Mammary epithelial cell (primary cell): ENCODE measurements at regions of chr6 and their contacts with region 1.

Region 1: GRCh38 chr6:27132532-27133280 is 114.8 kb upstream of the PRSS16 start:
- DNase-seq: peak; percentile 99
- H3K4me3 ChIP-seq: peak overlapping the region; percentile 64 to 69 (median 68)
- H3K27ac ChIP-seq: peak overlapping the region; percentile 97
- H3K4me1 ChIP-seq: peaks cover 13% of the 10 kb centered on the region
- H3K27me3 ChIP-seq: no peaks in the 10 kb centered on the region
- CTCF ChIP-seq: no peak

Region 2: GRCh38 chr6:26031595-26032339 is 1100.9 kb before region 1 on chr6:
- CTCF ChIA-PET with region 1: no interaction called
- dilution Hi-C with region 1: no loop called
- in situ Hi-C with region 1: loop called in 1 of 2 experiments (anchors 25 kb)
- intact Hi-C with region 1: loop called (anchors 2 kb)
- DNase-seq: peak; percentile 96
- H3K4me3 ChIP-seq: peak overlapping the region; percentile 53 to 62 (median 61)
- H3K27ac ChIP-seq: peak overlapping the region; percentile 85
- H3K4me1 ChIP-seq: peaks cover 26% of the 10 kb centered on the region
- H3K27me3 ChIP-seq: no peaks in the 10 kb centered on the region
- CTCF ChIP-seq: peak; percentile 5 to 23

Region 3: GRCh38 chr6:26187981-26188635 is 944.6 kb before region 1 on chr6:
- CTCF ChIA-PET with region 1: no interaction called
- dilution Hi-C with region 1: loop called (anchors 25 kb)
- in situ Hi-C with region 1: no loop called
- intact Hi-C with region 1: loop called (anchors 1 kb)
- DNase-seq: no peak
- H3K4me3 ChIP-seq: peak overlapping the region; percentile 30 to 59 (median 51)
- H3K27ac ChIP-seq: peak overlapping the region; percentile 79
- H3K4me1 ChIP-seq: peaks cover 17% of the 10 kb centered on the region
- H3K27me3 ChIP-seq: no peaks in the 10 kb centered on the region
- CTCF ChIP-seq: no peak

Region 4: DNA sequence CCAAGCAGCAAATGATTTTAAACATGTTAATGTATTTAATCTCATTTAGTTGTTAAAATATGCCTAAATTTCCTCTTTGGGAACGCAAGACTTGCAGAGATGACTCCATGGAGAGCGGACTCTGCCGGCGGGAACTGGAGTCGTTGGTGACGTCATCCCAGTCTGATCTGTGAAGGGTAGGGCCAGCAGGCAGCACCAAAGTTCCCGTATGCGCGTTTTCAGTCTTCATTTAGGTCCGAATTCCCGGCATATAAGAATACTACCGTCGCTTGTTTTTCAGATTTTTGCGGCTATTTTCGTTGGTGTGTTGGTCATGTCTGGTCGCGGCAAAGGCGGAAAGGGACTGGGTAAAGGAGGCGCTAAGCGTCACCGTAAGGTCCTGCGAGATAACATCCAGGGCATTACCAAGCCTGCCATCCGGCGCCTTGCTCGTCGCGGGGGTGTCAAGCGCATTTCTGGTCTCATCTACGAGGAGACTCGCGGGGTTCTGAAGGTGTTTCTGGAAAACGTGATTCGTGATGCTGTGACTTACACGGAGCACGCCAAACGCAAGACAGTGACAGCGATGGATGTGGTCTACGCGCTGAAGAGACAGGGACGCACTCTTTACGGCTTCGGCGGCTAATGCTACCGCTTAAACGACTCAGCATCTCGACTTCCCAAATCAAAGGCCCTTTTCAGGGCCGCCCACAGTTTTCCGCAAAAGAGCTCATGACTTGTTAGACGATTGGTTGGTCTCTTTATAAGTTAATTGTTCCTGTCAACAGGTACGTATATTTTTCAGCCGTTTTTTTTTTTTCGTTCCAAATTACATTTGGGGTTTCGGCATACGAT is 928.2 kb before region 1 on chr6:
- CTCF ChIA-PET with region 1: no interaction called
- dilution Hi-C with region 1: loop called (anchors 25 kb)
- in situ Hi-C with region 1: loop called in 1 of 2 experiments (anchors 25 kb)
- intact Hi-C with region 1: loop called (anchors 2 kb)
- DNase-seq: peak; percentile 95
- H3K4me3 ChIP-seq: peak overlapping the region; percentile 67 to 73 (median 71)
- H3K27ac ChIP-seq: peak overlapping the region; percentile 97
- H3K4me1 ChIP-seq: peaks cover 19% of the 10 kb centered on the region
- H3K27me3 ChIP-seq: no peaks in the 10 kb centered on the region
- CTCF ChIP-seq: peak; percentile 11 to 36

Region 5: DNA sequence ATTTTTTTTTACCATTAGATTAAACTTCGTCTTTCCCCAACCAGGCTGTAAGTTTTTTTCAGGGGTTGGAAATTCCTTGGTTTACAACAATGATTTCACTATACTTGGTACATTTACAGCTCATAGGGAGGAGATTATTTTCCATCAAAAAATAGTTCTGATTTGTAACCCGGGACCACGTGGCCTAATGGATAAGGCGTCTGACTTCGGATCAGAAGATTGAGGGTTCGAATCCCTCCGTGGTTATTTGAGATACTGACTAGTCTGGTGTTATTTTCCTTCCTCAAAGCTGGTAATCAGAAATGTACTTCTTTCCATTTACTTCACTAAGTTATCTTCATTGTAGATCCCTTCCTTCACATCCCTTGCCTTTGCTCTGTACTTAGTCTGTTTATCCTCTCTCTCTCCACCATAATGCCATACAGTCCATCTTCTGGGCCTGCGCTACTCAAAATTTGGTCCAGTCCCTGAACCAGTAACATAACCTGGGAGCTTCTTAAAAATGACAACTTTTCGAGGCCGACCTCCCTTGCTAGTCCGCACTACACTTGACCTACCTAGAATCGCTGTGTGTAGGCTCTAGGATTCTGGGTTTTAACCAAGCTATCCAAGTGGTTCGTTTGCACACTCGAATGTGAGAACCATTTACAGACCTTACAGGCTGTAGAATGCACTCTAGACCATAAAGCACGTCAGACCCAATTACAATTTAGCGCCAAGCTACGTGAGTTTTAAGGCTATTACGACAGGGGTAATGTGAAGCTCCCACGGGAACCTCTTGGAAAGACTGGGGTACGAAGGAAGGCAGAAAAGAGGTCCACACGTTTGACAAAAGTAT is 809.8 kb before region 1 on chr6:
- CTCF ChIA-PET with region 1: no interaction called
- dilution Hi-C with region 1: no loop called
- in situ Hi-C with region 1: loop called in 1 of 2 experiments (anchors 25 kb)
- intact Hi-C with region 1: no loop called
- DNase-seq: peak; percentile 90
- H3K4me3 ChIP-seq: peak overlapping the region; percentile 54 to 87 (median 60)
- H3K27ac ChIP-seq: peak overlapping the region; percentile 34
- H3K4me1 ChIP-seq: no peaks in the 10 kb centered on the region
- H3K27me3 ChIP-seq: no peaks in the 10 kb centered on the region
- CTCF ChIP-seq: no peak

Region 6: DNA sequence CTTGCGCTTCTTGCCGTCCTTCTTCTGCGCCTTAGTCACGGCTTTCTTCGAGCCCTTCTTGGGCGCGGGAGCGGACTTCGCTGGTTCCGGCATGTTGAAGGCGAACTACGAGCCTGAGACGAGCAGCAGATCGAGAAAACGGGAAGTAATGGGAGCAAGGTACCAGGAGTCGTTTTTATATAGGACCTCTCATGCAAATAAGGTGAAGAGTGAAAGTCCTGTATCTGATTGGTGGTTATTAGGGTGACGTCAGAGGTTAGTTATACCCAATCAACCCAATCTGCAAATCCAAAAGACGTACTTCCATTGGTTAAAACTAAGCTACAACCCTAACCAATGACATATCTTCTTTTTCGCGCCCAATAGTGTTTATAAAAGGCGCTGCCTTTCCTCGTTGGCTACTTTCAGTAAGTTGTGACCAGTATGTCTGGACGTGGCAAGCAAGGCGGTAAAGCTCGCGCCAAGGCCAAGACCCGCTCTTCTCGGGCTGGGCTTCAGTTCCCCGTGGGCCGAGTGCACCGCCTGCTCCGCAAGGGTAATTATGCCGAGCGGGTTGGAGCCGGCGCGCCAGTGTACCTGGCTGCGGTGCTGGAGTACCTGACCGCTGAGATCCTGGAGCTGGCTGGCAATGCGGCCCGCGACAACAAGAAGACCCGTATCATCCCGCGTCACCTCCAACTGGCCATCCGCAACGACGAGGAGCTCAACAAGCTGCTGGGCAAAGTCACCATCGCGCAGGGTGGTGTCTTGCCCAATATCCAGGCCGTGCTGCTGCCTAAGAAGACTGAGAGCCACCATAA is 14.2 kb after region 1 on chr6:
- CTCF ChIA-PET with region 1: no interaction called
- dilution Hi-C with region 1: no loop called
- in situ Hi-C with region 1: no loop called
- intact Hi-C with region 1: loop called (anchors 1 kb)
- DNase-seq: peak; percentile 99
- H3K4me3 ChIP-seq: peak overlapping the region; percentile 44 to 79 (median 73)
- H3K27ac ChIP-seq: peak overlapping the region; percentile 79
- H3K4me1 ChIP-seq: peaks cover 5% of the 10 kb centered on the region
- H3K27me3 ChIP-seq: no peaks in the 10 kb centered on the region
- CTCF ChIP-seq: no peak

Region 7: GRCh38 chr6:27809939-27810767 is 677.4 kb after region 1 on chr6:
- CTCF ChIA-PET with region 1: no interaction called
- dilution Hi-C with region 1: no loop called
- in situ Hi-C with region 1: no loop called
- intact Hi-C with region 1: loop called (anchors 5 kb)
- DNase-seq: peak; percentile 96
- H3K4me3 ChIP-seq: peak overlapping the region; percentile 58 to 85 (median 60)
- H3K27ac ChIP-seq: peak overlapping the region; percentile 77
- H3K4me1 ChIP-seq: peaks cover 18% of the 10 kb centered on the region
- H3K27me3 ChIP-seq: no peaks in the 10 kb centered on the region
- CTCF ChIP-seq: peak in 1 of 2 donors; percentile 25